A673 (cell line): ENCODE measurements at regions of chr10 and their contacts with region 1.

Region 1: GRCh38 chr10:2858452-2858851 is 208.9 kb upstream of the PFKP start:
- DNase-seq: no peak
- H3K4me3 ChIP-seq: no peak overlapping the region
- H3K27ac ChIP-seq: no peak overlapping the region
- H3K4me1 ChIP-seq: peaks cover 38% of the 10 kb centered on the region
- H3K27me3 ChIP-seq: no peaks in the 10 kb centered on the region
- CTCF ChIP-seq: no peak

Region 2: DNA sequence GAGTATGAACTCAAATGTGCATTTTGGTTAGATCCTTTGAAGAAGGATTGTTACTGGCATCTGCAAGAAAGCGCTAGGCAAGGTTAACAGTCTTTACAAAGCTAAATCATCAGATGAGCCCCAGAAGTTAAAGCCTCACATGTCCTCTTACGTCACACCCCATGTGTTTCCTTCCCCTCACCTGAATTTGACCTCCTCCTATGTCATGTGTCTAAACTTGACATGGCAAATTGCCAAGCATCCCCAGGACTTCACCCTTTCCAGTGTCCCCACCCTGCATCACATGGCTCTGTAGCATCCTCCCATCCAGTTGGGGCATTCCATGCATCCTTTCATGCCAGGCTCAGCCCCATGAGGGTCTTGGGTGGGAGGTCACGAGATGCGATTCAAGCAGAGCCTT is 36.3 kb before region 1 on chr10:
- CTCF ChIA-PET with region 1: no interaction called
- POLR2A ChIA-PET with region 1: no interaction called
- intact Hi-C with region 1: no loop called
- DNase-seq: no peak
- H3K4me3 ChIP-seq: no peak overlapping the region
- H3K27ac ChIP-seq: no peak overlapping the region
- H3K4me1 ChIP-seq: no peaks in the 10 kb centered on the region
- H3K27me3 ChIP-seq: peaks cover 54% of the 10 kb centered on the region
- CTCF ChIP-seq: no peak

Region 3: DNA sequence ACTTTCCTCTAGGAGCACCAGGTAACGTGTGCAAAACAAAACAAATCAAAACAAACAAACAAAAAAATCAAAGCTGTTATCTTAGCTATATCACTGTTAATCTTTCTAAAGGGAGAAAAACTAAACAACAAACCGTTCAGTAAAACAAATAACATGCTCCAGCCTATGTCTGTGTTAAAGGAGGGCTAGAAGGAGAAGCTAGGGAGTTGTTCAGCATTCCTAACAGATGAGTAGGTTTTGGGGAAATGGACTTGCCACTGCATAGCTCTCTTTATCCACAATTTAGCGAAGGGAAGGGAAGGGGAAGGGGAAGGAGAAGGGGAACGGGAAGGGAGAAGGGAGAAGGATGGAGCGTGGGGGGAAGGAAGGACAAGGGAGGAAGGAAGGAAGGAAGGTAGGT is 1833.3 kb after region 1 on chr10:
- CTCF ChIA-PET with region 1: no interaction called
- POLR2A ChIA-PET with region 1: interaction called, 31 read pairs
- intact Hi-C with region 1: no loop called
- DNase-seq: peak; percentile 81
- H3K4me3 ChIP-seq: no peak overlapping the region
- H3K27ac ChIP-seq: peak overlapping the region; percentile 76
- H3K4me1 ChIP-seq: peaks cover 12% of the 10 kb centered on the region
- H3K27me3 ChIP-seq: no peaks in the 10 kb centered on the region
- CTCF ChIP-seq: no peak